ENCODE measurements at regions of chr2 and their contacts with region 1.

Region 1: DNA sequence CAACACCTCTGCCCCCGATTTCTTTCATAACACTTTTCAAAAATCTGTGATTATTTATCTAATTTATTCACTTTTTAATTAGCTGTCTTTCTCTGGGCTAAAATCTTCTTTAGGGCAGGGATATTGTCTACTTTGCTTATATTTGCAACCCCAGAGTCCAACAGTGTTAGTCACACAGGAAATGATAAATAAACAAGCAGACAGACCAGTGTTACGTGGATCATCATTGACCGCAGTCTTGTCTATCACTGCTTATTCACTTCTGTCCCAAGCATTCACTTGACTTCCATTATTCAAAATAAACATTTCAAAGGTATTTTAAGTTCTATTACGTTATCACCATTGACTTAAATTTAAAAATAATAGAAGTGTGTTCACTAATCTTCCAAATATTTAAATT is 237.6 kb upstream of the UBE2E3 start:
- DNase-seq: peak; percentile 32 to 81
- H3K4me3 ChIP-seq: 0 out of 2 replicates have a peak overlapping the region, but pooled peaks have one; percentile 4
- H3K27ac ChIP-seq: peak overlapping the region; percentile 11
- H3K4me1 ChIP-seq: peaks cover 29% of the 10 kb centered on the region
- H3K27me3 ChIP-seq: no peaks in the 10 kb centered on the region
- CTCF ChIP-seq: no peak

Region 2: GRCh38 chr2:180728928-180729559 is 13.8 kb before region 1 on chr2:
- CTCF ChIA-PET with region 1: no interaction called
- POLR2A ChIA-PET with region 1: interaction called, 7 read pairs
- intact Hi-C with region 1: loop called (anchors 2 kb)
- DNase-seq: peak in 1 of 2 experiments; percentile 94
- H3K4me3 ChIP-seq: no peak overlapping the region
- H3K27ac ChIP-seq: peak overlapping the region; percentile 77
- H3K4me1 ChIP-seq: peaks cover 29% of the 10 kb centered on the region
- H3K27me3 ChIP-seq: no peaks in the 10 kb centered on the region
- CTCF ChIP-seq: no peak

Measured in PC-9 (cell line).